ENCODE measurements at regions of chr1 and their contacts with region 1.

Region 1: GRCh38 chr1:184664042-184664655 is 90.5 kb downstream of the EDEM3 start:
- DNase-seq: peak in 1 of 2 donors; percentile 82
- H3K4me3 ChIP-seq: peak overlapping the region; percentile 46 to 55
- H3K27ac ChIP-seq: no peak overlapping the region
- H3K4me1 ChIP-seq: peaks cover 0 to 8% of the 10 kb centered on the region in 2 donors
- H3K27me3 ChIP-seq: no peaks in the 10 kb centered on the region
- CTCF ChIP-seq: peak; percentile 89 to 97 (median 96)

Region 2: GRCh38 chr1:184075055-184076029 is 588.8 kb before region 1 on chr1:
- intact Hi-C with region 1: loop called (anchors 1 kb)
- DNase-seq: no peak
- H3K4me3 ChIP-seq: no peak overlapping the region
- H3K27ac ChIP-seq: no peak overlapping the region
- H3K4me1 ChIP-seq: peaks cover 0 to 3% of the 10 kb centered on the region in 2 donors
- H3K27me3 ChIP-seq: no peaks in the 10 kb centered on the region
- CTCF ChIP-seq: peak; percentile 47 to 72 (median 56)

Region 3: GRCh38 chr1:184242507-184242943 is 421.6 kb before region 1 on chr1:
- intact Hi-C with region 1: loop called (anchors 10 kb)
- DNase-seq: no peak
- H3K4me3 ChIP-seq: no peak overlapping the region
- H3K27ac ChIP-seq: no peak overlapping the region
- H3K4me1 ChIP-seq: no peaks in the 10 kb centered on the region
- H3K27me3 ChIP-seq: no peaks in the 10 kb centered on the region
- CTCF ChIP-seq: peak in 2 of 3 experiments; percentile 19 to 29

Region 4: DNA sequence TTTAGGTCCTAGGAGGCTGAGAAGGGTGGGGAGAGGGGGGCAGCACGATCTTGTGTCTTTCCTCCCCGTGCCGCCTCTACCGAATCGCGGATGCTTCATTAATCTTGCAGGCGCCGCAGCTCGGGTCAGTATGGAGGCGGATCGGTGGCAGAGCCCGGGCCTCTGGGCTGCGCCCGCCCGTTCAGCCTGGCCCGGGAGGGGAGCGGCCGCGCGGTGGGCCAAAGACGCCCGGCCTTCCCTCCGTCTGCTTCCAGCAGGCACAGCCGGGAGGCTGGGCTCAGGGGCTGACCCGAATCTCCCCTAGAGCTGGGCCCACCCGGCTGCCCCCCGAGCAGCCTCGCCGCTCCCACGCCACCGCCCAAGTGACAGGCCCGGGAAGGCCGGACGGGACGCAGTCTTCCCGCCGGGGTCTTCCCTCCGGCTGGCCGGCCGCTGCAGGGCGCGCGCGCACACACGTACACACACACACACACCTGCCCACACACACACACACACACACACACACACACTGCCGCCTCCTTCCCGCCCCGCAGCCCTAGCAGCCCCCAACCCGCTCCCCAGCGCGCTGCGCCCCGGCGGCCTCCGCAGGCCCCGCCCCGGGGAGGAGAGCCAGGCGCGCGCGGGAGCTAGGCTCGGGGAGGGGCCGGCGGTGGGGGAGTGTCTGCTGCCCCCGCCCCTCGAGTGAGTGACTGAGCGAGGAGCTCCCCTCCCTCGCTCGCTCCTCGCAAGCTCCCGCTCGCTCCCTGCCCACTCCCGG is 277.7 kb before region 1 on chr1 and contains the start of gene C1orf21:
- intact Hi-C with region 1: loop called (anchors 5 kb)
- DNase-seq: peak; percentile 54 to 93
- H3K4me3 ChIP-seq: peak within 1 kb of the TSS; percentile 87 to 98
- H3K27ac ChIP-seq: peak within 1 kb of the TSS; percentile 73 to 75
- H3K4me1 ChIP-seq: peaks cover 0 to 5% of the 10 kb centered on the region in 2 donors
- H3K27me3 ChIP-seq: no peaks in the 10 kb centered on the region
- CTCF ChIP-seq: no peak
- total RNA-seq, gene C1orf21: 21.8 TPM

Region 5: GRCh38 chr1:184563308-184563707 is 100.8 kb before region 1 on chr1:
- intact Hi-C with region 1: loop called (anchors 5 kb)
- DNase-seq: no peak
- H3K4me3 ChIP-seq: no peak overlapping the region
- H3K27ac ChIP-seq: no peak overlapping the region
- H3K4me1 ChIP-seq: peaks cover 2 to 6% of the 10 kb centered on the region in 2 donors
- H3K27me3 ChIP-seq: no peaks in the 10 kb centered on the region
- CTCF ChIP-seq: peak; percentile 25 to 62 (median 33)

Region 6: GRCh38 chr1:184605941-184606340 is 58.2 kb before region 1 on chr1:
- intact Hi-C with region 1: loop called (anchors 5 kb)
- DNase-seq: no peak
- H3K4me3 ChIP-seq: no peak overlapping the region
- H3K27ac ChIP-seq: peak overlapping the region in 1 of 2 donors; percentile 60
- H3K4me1 ChIP-seq: no peaks in the 10 kb centered on the region
- H3K27me3 ChIP-seq: no peaks in the 10 kb centered on the region
- CTCF ChIP-seq: no peak

Region 7: DNA sequence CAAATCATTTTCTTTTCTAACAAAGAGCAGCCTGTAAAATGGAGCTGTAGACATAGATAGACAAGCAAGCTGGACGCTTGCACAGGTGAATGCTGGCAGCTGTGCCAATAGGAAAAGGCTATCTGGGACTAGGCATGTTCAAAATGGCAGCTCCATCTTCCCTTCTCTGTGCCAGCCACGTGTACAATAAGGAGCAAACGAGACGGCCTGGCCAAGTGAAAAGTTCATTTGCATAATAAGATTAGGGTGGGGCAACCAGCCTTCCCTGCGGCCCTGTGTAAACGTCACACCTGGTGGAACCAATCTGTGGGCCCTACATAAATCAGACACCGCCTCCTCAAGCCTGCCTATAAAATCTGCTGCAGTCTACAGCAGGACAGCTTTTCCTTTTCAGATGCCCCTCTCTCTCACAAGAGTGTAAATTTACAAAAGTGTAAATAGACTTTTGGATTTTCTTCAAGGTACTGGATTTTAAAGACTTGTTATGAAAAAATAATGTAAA is 107.1 kb after region 1 on chr1:
- intact Hi-C with region 1: no loop called
- DNase-seq: no peak
- H3K4me3 ChIP-seq: no peak overlapping the region
- H3K27ac ChIP-seq: no peak overlapping the region
- H3K4me1 ChIP-seq: no peaks in the 10 kb centered on the region
- H3K27me3 ChIP-seq: no peaks in the 10 kb centered on the region
- CTCF ChIP-seq: no peak

Region 8: DNA sequence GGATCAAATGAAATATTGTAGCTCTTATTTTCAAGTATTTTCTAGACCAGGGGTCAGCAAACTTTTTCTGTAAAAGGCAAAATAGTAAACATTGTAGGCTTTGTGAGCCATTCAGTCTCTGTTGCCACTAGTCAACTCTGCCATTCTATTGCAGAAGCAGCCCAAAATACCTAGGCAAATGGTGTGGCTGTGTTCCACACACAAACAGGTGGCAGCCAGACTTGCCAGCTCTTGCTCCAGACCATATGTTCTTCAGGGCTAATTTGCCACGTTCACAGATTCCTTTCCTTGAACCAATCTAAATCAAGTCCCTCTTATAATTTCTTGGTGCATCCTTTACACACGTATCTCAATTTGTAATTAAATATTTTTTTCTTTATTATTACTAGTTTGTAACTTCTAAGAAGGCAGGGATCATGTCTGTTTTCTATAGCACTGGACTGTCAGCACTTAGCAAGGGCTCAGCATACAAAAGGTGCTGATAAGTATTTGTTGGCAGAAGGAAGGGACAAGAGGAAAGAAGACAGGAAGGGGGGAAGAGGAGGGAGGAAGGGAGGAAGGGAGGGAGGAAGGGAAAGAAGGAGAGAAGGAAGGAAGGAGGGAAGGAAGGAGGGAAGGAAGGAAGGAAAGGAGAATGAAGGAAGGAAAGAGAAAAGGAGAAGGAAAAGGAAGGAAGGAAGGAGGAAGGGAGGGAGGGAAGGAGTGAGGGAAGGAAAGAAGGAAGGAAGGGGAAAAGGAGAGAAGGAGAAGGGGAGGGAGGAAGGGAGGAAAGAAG is 197.0 kb after region 1 on chr1:
- intact Hi-C with region 1: no loop called
- DNase-seq: no peak
- H3K4me3 ChIP-seq: no peak overlapping the region
- H3K27ac ChIP-seq: peak overlapping the region; percentile 21 to 29
- H3K4me1 ChIP-seq: peaks cover 0 to 10% of the 10 kb centered on the region in 2 donors
- H3K27me3 ChIP-seq: no peaks in the 10 kb centered on the region
- CTCF ChIP-seq: no peak

Measured in ascending aorta (tissue), 2 donors.